CD8-positive, alpha-beta memory T cell (primary cell): ENCODE measurements at regions of chr16 and their contacts with region 1.

Region 1: GRCh38 chr16:3234543-3235541 is at the start of gene ZNF200:
- DNase-seq: peak; percentile 86 to 94 (median 93)
- H3K4me3 ChIP-seq: peak within 1 kb of the TSS; percentile 99
- H3K4me3 Mint-ChIP-seq: peak within 1 kb of the TSS; percentile 92 to 98 (median 95)
- H3K27ac ChIP-seq: peak within 1 kb of the TSS; percentile 92
- H3K27ac Mint-ChIP-seq: peak within 1 kb of the TSS; percentile 96 to 97 (median 97)
- H3K4me1 ChIP-seq: peaks cover 21% of the 10 kb centered on the region
- H3K4me1 Mint-ChIP-seq: peaks cover 37 to 47% (median 42%) of the 10 kb centered on the region in 3 donors
- H3K27me3 ChIP-seq: no peaks in the 10 kb centered on the region
- H3K27me3 Mint-ChIP-seq: peaks cover 0 to under 1% of the 10 kb centered on the region in 2 donors
- total RNA-seq, gene ZNF200: 13.0 to 14.6 TPM

Region 2: DNA sequence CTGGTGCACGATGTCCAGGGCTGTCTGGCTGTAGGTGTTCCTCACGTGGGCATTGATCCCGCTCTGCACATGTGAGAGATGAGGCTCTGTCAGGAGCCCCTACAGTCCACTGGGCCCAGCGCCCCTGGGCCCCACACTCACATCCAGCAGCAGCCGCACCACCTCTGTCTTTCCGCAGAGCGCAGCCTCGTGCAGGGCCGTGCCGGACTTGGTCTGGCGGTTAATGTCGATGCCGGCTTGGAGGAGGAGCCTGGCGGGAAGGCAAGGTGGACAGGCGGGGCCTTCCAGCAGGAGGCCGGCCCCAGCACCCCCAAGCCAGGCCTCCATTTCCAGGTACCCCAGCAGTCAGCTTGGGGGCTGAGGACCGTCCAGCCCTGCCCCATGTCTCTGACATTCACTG is 1047.6 kb before region 1 on chr16:
- CTCF ChIA-PET with region 1: no interaction called
- POLR2A ChIA-PET with region 1: interaction called, 10 read pairs
- DNase-seq: no peak
- H3K4me3 ChIP-seq: no peak overlapping the region
- H3K4me3 Mint-ChIP-seq: no peak overlapping the region
- H3K27ac ChIP-seq: no peak overlapping the region
- H3K27ac Mint-ChIP-seq: no peak overlapping the region
- H3K4me1 ChIP-seq: no peaks in the 10 kb centered on the region
- H3K4me1 Mint-ChIP-seq: peaks cover 2 to 3% (median 2%) of the 10 kb centered on the region in 3 donors
- H3K27me3 ChIP-seq: no peaks in the 10 kb centered on the region
- H3K27me3 Mint-ChIP-seq: no peaks in the 10 kb centered on the region